HCT116 (cell line): ENCODE measurements at regions of chr7 and their contacts with region 1.

Region 1: DNA sequence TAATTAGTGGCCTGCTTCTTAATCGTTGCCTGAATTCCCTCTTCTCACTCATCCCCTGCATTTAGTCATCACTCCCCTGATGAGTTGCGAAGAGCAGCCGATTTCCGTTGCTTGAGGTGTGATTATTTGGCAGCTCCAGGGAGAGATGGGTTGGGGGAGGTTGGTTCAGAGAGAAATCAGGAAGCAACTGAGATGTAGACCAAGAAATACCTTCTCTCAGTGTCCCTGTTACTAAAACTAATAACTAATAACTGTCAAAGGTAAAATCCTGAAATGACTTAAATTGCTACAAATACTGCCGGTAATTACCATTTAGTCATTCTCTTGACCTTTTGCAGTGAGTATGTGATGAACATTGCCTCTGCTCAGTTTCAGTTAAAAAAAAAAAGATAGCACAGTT is 76.9 kb downstream of the ELMO1 start:
- DNase-seq: no peak
- ATAC-seq: no peak
- H3K4me3 ChIP-seq: no peak overlapping the region
- H3K27ac ChIP-seq: no peak overlapping the region
- H3K4me1 ChIP-seq: no peaks in the 10 kb centered on the region
- H3K27me3 ChIP-seq: peaks cover 37% of the 10 kb centered on the region
- CTCF ChIP-seq: no peak
- POLR2A ChIP-seq: no peak
- RAD21 ChIP-seq: no peak

Region 2: GRCh38 chr7:37259319-37259821 is 112.4 kb before region 1 on chr7:
- CTCF ChIA-PET with region 1: no interaction called
- POLR2A ChIA-PET with region 1: no interaction called
- RAD21 ChIA-PET with region 1: no interaction called
- intact Hi-C with region 1: no loop called
- DNase-seq: no peak
- ATAC-seq: no peak
- H3K4me3 ChIP-seq: no peak overlapping the region
- H3K27ac ChIP-seq: no peak overlapping the region
- H3K4me1 ChIP-seq: no peaks in the 10 kb centered on the region
- H3K27me3 ChIP-seq: peaks cover 63% of the 10 kb centered on the region
- CTCF ChIP-seq: no peak
- POLR2A ChIP-seq: no peak
- RAD21 ChIP-seq: no peak

Region 3: GRCh38 chr7:37382546-37383088 is 10.9 kb after region 1 on chr7:
- CTCF ChIA-PET with region 1: no interaction called
- POLR2A ChIA-PET with region 1: no interaction called
- RAD21 ChIA-PET with region 1: no interaction called
- intact Hi-C with region 1: loop called (anchors 1 kb)
- DNase-seq: no peak
- ATAC-seq: no peak
- H3K4me3 ChIP-seq: no peak overlapping the region
- H3K27ac ChIP-seq: no peak overlapping the region
- H3K4me1 ChIP-seq: no peaks in the 10 kb centered on the region
- H3K27me3 ChIP-seq: 0 out of 2 replicates have a peak, but pooled peaks cover 13% of the 10 kb centered on the region
- CTCF ChIP-seq: no peak
- POLR2A ChIP-seq: no peak
- RAD21 ChIP-seq: no peak

Region 4: GRCh38 chr7:37833107-37833817 is 461.5 kb after region 1 on chr7:
- CTCF ChIA-PET with region 1: no interaction called
- POLR2A ChIA-PET with region 1: no interaction called
- RAD21 ChIA-PET with region 1: no interaction called
- intact Hi-C with region 1: no loop called
- DNase-seq: peak; percentile 7
- ATAC-seq: peak; percentile 49; the same call in 1 of the 2 replicates
- H3K4me3 ChIP-seq: no peak overlapping the region
- H3K27ac ChIP-seq: no peak overlapping the region
- H3K4me1 ChIP-seq: peaks cover 0 to 3% of the 10 kb centered on the region in 2 experiments; a peak in 1 of 4 replicates
- H3K27me3 ChIP-seq: no peaks in the 10 kb centered on the region; the same call in 1 of the 2 replicates
- CTCF ChIP-seq: peak; percentile 26 to 58 (median 47); a peak in 5 of 6 replicates
- POLR2A ChIP-seq: no peak
- RAD21 ChIP-seq: peak; percentile 61